ENCODE measurements at regions of chr7 and their contacts with region 1.

Region 1: DNA sequence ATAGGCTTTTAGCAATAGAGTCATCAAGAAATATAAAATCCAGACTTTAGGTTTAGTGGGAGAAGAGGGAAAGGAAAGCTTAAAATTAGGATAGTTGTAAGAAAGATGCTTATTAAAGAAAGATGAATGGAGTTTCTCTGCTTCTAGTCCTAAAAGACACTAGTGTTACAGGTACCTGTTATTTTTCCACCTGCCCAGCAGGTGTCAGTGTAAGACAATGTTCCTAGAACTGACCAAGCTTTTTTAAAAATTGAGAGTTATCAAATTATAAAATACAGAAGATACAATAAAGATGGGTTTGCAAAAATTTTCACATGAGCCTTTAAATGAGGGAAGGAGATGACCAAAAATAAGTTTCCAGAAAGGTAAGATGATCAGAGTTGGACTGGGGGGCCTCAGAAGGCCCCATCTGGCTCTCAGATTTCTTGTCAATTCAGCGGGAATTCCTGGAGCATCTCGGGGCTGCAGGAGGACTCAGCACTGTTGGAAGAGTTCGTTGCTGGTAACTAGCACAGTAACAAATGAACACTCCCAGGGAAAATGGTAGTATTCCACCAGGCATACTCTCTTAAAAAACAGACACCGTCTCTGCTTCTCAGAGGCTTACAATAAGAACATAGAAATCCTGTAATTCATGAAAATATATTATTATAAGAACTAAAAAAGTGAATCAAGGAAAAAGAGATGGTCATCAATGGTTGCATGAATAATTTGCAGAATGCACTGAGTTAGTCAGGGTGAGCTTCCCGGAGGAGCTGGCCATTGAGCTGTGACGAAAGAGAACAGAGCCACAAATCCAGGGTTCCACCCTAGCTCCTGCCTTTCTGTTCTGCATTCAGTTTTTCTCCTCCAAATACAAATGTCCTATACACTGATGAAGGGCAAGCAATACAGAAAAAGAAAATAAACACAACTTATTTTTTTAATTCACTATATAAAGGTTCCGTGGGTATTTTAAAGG is 71.8 kb upstream of the PIK3CG start:
- DNase-seq: no peak
- ATAC-seq: peak; percentile 35; the same call in 1 of the 3 replicates
- H3K4me3 ChIP-seq: no peak overlapping the region
- H3K27ac ChIP-seq: no peak overlapping the region
- H3K4me1 ChIP-seq: peaks cover 11% of the 10 kb centered on the region
- H3K27me3 ChIP-seq: no peaks in the 10 kb centered on the region; a peak in 1 of 4 replicates
- CTCF ChIP-seq: peak; percentile 51 to 66 (median 61); a peak in 5 of 6 replicates
- EP300 ChIP-seq: no peak
- POLR2A ChIP-seq: no peak
- RAD21 ChIP-seq: peak; percentile 94

Region 2: GRCh38 chr7:106865130-106866041 is 72.1 kb after region 1 on chr7 and contains the start of gene PIK3CG:
- CTCF ChIA-PET with region 1: no interaction called
- POLR2A ChIA-PET with region 1: no interaction called
- RAD21 ChIA-PET with region 1: interaction called, 3 read pairs
- SMC1A ChIA-PET with region 1: interaction called, 3 read pairs
- in situ Hi-C with region 1: no loop called
- intact Hi-C with region 1: loop called (anchors 5 kb)
- DNase-seq: peak; percentile 41
- ATAC-seq: peak; percentile 68
- H3K4me3 ChIP-seq: peak within 1 kb of the TSS; percentile 70
- H3K27ac ChIP-seq: peak within 1 kb of the TSS; percentile 60
- H3K4me1 ChIP-seq: peaks cover 32% of the 10 kb centered on the region
- H3K27me3 ChIP-seq: no peaks in the 10 kb centered on the region
- CTCF ChIP-seq: no peak
- EP300 ChIP-seq: peak in 1 of 2 experiments; percentile 44; a peak in 1 of 4 replicates
- POLR2A ChIP-seq: no peak
- RAD21 ChIP-seq: no peak
- polyA plus RNA-seq, gene PIK3CG: 0.79 to 1.3 TPM

Region 3: GRCh38 chr7:106947244-106947728 is 154.0 kb after region 1 on chr7:
- CTCF ChIA-PET with region 1: interaction called, 10 read pairs
- POLR2A ChIA-PET with region 1: no interaction called
- RAD21 ChIA-PET with region 1: interaction called, 10 read pairs
- SMC1A ChIA-PET with region 1: no interaction called
- in situ Hi-C with region 1: no loop called
- intact Hi-C with region 1: loop called (anchors 1 kb)
- DNase-seq: no peak
- ATAC-seq: peak; percentile 87
- H3K4me3 ChIP-seq: no peak overlapping the region
- H3K27ac ChIP-seq: no peak overlapping the region
- H3K4me1 ChIP-seq: no peaks in the 10 kb centered on the region
- H3K27me3 ChIP-seq: peaks cover 0 to 6% of the 10 kb centered on the region in 2 experiments; a peak in 2 of 4 replicates
- CTCF ChIP-seq: peak; percentile 53 to 55 (median 53); a peak in 5 of 6 replicates
- EP300 ChIP-seq: no peak
- POLR2A ChIP-seq: no peak
- RAD21 ChIP-seq: peak; percentile 78

Region 4: DNA sequence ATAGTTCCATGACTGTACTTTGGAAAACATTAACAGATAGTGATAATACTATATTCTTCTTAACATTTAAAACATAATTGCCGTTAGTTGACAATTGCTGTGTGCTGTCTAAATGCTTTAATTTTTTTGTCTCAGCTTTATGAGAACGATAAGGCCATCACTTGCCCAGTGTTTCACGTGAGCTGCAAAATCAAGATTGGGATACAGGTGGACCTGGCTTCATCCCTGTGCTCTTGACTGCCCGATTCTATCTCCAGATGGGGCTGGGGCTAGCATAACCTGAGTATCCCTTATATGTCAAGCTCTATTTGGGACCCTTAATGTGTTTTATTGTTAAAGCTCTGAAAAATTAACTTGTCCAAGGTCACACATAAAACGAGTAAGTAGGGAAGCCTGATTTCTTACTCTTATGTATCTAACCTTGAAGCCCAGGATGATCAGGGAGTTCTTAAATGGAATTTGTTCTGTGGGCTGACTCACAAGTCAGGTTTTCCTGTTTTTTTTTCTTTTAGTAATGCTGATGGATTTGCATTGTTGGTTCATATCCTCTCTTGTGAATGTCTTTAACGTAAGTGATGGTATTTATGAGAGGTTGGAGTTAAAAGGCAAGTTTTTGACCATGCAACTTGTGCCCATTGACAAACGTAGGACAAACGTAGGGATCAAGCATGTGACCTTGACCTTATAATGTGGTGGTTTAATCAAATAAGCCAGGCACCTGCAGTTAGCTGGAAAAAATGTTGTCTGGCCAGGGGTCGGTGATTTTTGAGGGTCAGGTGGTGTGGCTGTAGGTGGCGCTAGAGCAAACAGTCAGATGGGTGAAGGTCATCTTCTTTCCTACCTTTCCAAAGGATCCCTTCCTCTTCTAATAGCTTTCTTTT is 254.8 kb after region 1 on chr7:
- CTCF ChIA-PET with region 1: interaction called, 11 read pairs
- POLR2A ChIA-PET with region 1: no interaction called
- RAD21 ChIA-PET with region 1: no interaction called
- SMC1A ChIA-PET with region 1: no interaction called
- in situ Hi-C with region 1: no loop called
- intact Hi-C with region 1: no loop called
- DNase-seq: no peak
- ATAC-seq: no peak
- H3K4me3 ChIP-seq: no peak overlapping the region
- H3K27ac ChIP-seq: no peak overlapping the region
- H3K4me1 ChIP-seq: no peaks in the 10 kb centered on the region
- H3K27me3 ChIP-seq: peaks cover 4 to 12% of the 10 kb centered on the region in 2 experiments; a peak in 3 of 4 replicates
- CTCF ChIP-seq: peak in 2 of 3 experiments; percentile 17 to 19; a peak in 2 of 6 replicates
- EP300 ChIP-seq: no peak
- POLR2A ChIP-seq: no peak
- RAD21 ChIP-seq: no peak

Region 5: GRCh38 chr7:107168233-107169119 is 375.2 kb after region 1 on chr7 and contains the start of gene HBP1:
- CTCF ChIA-PET with region 1: interaction called, 11 read pairs
- POLR2A ChIA-PET with region 1: no interaction called
- RAD21 ChIA-PET with region 1: interaction called, 3 read pairs
- SMC1A ChIA-PET with region 1: no interaction called
- in situ Hi-C with region 1: no loop called
- intact Hi-C with region 1: no loop called
- DNase-seq: peak; percentile 100
- ATAC-seq: peak; percentile 90
- H3K4me3 ChIP-seq: peak within 1 kb of the TSS; percentile 86
- H3K27ac ChIP-seq: peak within 1 kb of the TSS; percentile 90
- H3K4me1 ChIP-seq: peaks cover 17% of the 10 kb centered on the region
- H3K27me3 ChIP-seq: no peaks in the 10 kb centered on the region
- CTCF ChIP-seq: no peak
- EP300 ChIP-seq: peak in 1 of 2 experiments; percentile 26; a peak in 1 of 4 replicates
- POLR2A ChIP-seq: peak; percentile 78
- RAD21 ChIP-seq: no peak
- polyA plus RNA-seq, gene HBP1: 8.5 to 10.2 TPM

Measured in GM12878 (cell line).